Right ventricle myocardium inferior (tissue), 1 donor: ENCODE measurements at regions of chr9 and their contacts with region 1.

Region 1: GRCh38 chr9:14030375-14031059 is 283.4 kb downstream of the NFIB start:
- DNase-seq: no peak
- ATAC-seq: peak; percentile 46

Region 2: DNA sequence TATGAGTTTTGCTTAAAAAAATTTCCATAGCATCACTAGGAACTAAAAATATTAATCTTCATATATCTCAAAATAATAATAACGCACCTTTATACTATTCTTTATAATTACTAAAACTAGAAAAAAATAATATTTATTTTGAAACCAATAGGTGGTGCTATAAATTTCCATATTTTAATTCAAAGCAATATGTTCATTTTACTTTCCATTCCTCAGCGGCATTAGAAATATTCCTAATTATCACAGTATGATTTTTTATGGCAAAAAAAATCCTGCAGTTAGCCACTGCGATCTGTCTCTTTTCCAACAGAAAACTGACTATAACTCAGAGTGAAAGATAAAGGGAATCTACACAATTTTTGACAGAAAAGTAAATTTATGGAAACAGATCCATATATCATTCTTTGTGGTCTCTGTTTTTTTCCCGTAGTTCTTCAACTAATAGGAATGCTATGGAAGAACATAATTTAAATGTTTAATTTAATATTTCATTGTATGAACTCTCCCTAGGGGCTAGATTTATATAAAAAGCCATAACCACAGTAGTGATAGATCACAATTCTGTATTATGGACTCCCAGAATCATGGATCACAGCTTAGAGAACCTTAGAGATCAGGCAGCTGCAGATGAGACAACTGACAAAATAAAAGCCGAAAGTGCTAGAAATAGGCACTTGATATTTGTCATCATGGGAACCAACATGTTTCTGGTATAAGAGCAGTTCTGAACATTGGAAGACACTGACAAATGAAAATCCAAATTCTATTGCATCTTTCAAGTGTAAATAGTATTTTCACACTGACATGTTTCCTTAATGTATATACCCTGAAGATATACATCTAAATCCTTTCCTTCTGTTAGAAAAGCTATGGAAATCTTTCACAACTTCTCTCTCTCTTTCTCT is 583.3 kb before region 1 on chr9:
- intact Hi-C with region 1: loop called (anchors 5 kb)
- DNase-seq: no peak
- ATAC-seq: no peak

Region 3: GRCh38 chr9:13787234-13787833 is 243.2 kb before region 1 on chr9:
- intact Hi-C with region 1: loop called (anchors 5 kb)
- DNase-seq: no peak
- ATAC-seq: peak; percentile 82

Region 4: GRCh38 chr9:14096258-14096922 is 65.9 kb after region 1 on chr9:
- intact Hi-C with region 1: loop called (anchors 5 kb)
- DNase-seq: no peak
- ATAC-seq: peak; percentile 75

Region 5: GRCh38 chr9:14314929-14315645 is 284.6 kb after region 1 on chr9:
- intact Hi-C with region 1: loop called (anchors 2 kb)
- DNase-seq: peak; percentile 95
- ATAC-seq: peak; percentile 84

Region 6: GRCh38 chr9:14347406-14348122 is 317.0 kb after region 1 on chr9:
- intact Hi-C with region 1: loop called (anchors 2 kb)
- DNase-seq: peak; percentile 75
- ATAC-seq: peak; percentile 67